ENCODE measurements at regions of chr2 and their contacts with region 1.

Region 1: DNA sequence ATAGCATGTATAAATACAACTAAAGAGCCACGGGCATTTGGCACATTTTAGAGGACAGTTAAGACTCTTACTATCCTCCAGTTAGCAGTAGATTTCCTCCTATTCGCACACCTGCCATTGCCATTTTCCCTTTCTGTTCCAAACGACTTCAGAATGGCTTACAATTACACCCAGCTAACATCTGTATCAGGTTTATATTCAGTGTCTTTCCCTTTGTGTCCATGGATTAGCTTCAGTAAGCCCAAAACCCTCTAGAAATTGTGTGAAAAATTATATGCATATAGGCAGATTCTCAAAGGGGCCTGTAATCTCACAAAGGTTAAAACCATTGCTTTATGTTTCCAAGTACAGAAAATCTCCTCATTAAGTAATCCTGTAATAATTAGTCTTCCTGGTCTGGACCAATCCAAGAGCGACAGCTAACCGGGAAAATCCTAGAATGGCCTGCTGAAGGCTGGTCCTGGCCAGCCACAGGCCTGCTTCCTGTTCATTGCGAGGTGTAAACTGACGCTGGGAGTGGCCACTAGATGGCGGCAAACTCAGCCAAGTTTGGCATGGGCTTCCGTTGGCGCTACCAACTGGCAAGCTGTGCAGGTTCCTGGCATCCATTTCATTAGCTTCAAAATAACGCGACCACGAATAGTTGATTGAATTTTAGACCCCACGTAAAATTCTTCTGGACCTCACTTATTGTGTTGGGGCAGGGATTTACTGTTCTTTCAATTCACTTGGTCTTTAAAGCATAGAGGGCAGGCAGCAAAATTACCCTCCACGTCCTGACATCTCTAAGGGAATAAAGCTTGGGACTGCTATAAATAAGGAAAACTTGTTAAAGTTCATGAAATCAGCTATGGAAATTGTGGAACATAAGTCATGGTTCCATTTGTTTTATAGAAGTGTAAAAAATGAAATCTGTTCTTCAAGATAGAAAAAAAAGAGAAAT is 17.1 kb downstream of the ARHGAP25 start:
- DNase-seq: peak; percentile 87
- H3K4me3 ChIP-seq: no peak overlapping the region
- H3K27ac ChIP-seq: no peak overlapping the region
- H3K4me1 ChIP-seq: peaks cover 8% of the 10 kb centered on the region
- H3K27me3 ChIP-seq: no peaks in the 10 kb centered on the region
- CTCF ChIP-seq: peak; percentile 95 to 97

Region 2: DNA sequence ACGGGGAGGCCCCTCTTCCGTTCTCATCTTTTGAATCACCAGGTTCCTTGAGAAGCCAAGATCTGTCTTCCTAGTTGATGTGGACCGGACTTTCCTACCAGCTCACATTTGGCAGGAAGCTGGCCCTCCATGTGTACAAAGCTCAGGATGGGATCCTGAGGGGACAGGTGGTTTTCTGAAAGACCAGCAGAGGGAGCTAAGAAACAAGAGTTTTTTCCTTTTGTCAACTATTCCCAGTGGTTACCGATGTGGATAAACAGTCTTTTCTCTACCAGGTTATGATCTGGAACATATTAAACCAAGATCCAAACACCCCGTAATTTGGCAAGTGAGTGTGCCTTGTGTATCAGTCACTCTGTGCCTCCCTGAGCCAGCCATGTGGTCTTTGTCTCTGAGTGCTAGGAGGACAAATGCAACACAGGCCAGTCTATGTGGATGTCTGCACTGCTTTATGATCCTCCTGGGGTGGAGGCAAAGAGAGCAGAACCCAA is 42.2 kb before region 1 on chr2:
- CTCF ChIA-PET with region 1: no interaction called
- dilution Hi-C with region 1: no loop called
- in situ Hi-C with region 1: no loop called
- intact Hi-C with region 1: loop called (anchors 2 kb)
- DNase-seq: peak; percentile 39
- H3K4me3 ChIP-seq: no peak overlapping the region
- H3K27ac ChIP-seq: no peak overlapping the region
- H3K4me1 ChIP-seq: no peaks in the 10 kb centered on the region
- H3K27me3 ChIP-seq: peaks cover 3% of the 10 kb centered on the region
- CTCF ChIP-seq: peak; percentile 63 to 81

Region 3: GRCh38 chr2:68807821-68808266 is 56.2 kb after region 1 on chr2:
- CTCF ChIA-PET with region 1: interaction called, 52 read pairs
- dilution Hi-C with region 1: no loop called
- in situ Hi-C with region 1: no loop called
- intact Hi-C with region 1: loop called (anchors 1 kb)
- DNase-seq: peak; percentile 95
- H3K4me3 ChIP-seq: no peak overlapping the region
- H3K27ac ChIP-seq: peak overlapping the region; percentile 63
- H3K4me1 ChIP-seq: peaks cover 77% of the 10 kb centered on the region
- H3K27me3 ChIP-seq: no peaks in the 10 kb centered on the region
- CTCF ChIP-seq: no peak

Region 4: DNA sequence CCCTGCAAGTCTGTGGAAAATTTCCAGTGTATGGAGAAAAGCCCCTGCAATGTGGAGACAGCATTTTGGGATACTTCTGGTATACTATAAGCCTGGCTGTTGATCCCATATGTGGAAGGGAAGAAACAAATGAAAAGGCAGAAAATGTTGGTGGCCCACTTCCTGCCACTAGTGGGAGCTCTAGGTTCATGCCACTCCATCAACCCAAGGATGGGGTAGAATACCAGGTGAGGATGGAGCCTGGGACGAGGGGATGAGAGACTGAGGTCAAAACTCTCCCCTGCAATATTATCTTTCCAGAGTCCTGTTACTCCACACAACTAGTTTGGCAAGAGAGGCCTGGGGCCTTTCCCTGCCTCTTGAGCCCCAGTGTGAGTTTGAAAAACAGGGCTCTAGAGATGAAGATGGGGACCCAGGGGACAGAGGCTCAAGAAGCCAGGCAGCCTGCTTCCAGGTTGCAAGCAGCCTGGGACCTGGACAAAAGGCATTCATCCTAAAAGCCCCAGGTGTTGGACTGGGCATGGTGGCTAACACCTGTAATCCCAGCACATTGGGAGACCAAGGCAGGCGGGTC is 87.7 kb after region 1 on chr2:
- CTCF ChIA-PET with region 1: no interaction called
- dilution Hi-C with region 1: no loop called
- in situ Hi-C with region 1: no loop called
- intact Hi-C with region 1: loop called (anchors 1 kb)
- DNase-seq: peak; percentile 12
- H3K4me3 ChIP-seq: no peak overlapping the region
- H3K27ac ChIP-seq: no peak overlapping the region
- H3K4me1 ChIP-seq: no peaks in the 10 kb centered on the region
- H3K27me3 ChIP-seq: no peaks in the 10 kb centered on the region
- CTCF ChIP-seq: peak; percentile 78 to 91

Region 5: DNA sequence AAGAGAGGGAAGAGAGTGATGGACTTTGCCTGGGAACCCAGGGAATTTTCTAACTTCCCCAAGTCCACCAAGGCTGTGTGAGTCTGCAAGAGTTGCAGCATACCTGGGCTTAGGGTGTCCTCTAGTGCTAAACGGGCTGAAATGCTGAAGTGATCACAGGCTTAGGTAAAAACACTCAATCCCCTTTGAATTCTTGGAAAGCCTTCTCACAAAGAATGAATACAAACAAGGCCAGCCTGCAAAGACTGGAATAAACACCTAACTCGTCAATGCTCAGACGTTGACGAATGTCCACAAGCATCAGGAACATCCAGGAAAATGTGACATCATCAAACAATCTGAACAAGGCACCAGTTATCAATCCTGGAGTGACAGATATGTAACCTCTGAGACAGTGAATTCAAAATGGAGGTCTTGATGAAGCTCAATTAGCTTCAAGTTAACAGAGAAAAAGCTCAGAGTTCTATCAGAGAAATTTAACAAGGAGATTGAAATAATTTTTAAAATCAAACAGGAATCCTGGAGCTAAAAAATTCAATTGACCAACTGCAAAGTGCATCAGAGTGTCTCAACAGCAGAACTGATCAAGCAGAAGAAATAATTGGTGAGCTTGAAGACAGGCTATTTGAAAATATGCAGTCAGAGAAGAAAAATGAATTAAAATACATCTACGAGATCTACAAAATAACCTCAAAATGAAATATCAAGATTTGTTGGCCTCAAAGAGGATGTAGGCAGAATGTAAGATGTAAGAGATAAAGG is 149.7 kb after region 1 on chr2:
- CTCF ChIA-PET with region 1: interaction called, 4 read pairs
- dilution Hi-C with region 1: loop called (anchors 25 kb)
- in situ Hi-C with region 1: loop called in 1 of 2 experiments (anchors 5 kb)
- intact Hi-C with region 1: loop called (anchors 2 kb)
- DNase-seq: peak; percentile 28
- H3K4me3 ChIP-seq: no peak overlapping the region
- H3K27ac ChIP-seq: no peak overlapping the region
- H3K4me1 ChIP-seq: no peaks in the 10 kb centered on the region
- H3K27me3 ChIP-seq: no peaks in the 10 kb centered on the region
- CTCF ChIP-seq: peak in 1 of 2 donors; percentile 16

Region 6: DNA sequence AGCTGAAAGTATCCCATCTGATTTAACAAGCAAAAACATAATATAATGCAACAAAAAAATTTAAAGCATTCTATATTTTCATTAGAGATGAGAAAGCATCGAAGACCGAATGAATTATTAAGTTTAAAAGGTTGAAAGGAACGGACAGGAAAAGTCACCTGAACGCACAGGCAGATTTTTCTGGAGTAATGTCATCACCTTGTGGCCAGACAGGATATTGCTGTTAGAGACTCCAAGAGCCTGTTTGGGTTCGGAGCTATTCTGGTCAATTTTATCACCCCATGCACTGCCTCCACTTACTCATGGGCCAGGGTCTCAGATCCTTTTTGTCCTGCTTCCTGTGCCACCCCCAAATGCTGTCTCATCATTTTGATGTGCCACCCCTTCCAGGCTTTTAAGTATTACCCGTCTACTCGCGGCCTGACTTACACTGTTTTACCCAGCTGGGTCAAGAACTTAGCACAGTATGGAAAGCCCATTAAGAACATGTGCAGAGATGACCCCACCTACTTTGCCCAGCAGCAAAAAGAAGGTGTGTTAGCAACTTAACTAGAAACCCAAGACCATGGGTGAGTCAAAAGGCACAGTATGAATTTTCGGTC is 173.7 kb after region 1 on chr2:
- CTCF ChIA-PET with region 1: interaction called, 8 read pairs
- dilution Hi-C with region 1: loop called (anchors 25 kb)
- in situ Hi-C with region 1: no loop called
- intact Hi-C with region 1: loop called (anchors 1 kb)
- DNase-seq: peak; percentile 55
- H3K4me3 ChIP-seq: no peak overlapping the region
- H3K27ac ChIP-seq: no peak overlapping the region
- H3K4me1 ChIP-seq: peaks cover 21% of the 10 kb centered on the region
- H3K27me3 ChIP-seq: no peaks in the 10 kb centered on the region
- CTCF ChIP-seq: peak; percentile 99

Region 7: DNA sequence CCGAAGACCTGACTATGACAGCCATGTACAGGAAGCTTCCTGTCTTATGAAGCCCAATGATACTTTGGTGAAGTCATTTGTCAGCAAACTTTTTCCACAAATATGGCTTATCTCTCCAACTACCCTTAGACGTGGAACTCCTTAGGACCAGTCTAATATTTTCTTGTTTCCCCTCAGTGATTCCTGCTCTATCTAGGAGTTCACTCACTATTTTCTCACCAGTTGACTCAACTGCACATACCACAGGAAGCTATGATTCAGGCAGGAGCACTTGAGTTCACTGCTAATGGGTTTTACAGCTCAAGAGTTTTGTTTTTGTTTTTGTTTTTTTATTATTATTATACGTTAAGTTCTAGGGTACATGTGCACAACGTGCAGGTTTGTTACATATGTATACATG is 370.6 kb after region 1 on chr2:
- CTCF ChIA-PET with region 1: no interaction called
- dilution Hi-C with region 1: no loop called
- in situ Hi-C with region 1: no loop called
- intact Hi-C with region 1: no loop called
- DNase-seq: peak; percentile 53
- H3K4me3 ChIP-seq: no peak overlapping the region
- H3K27ac ChIP-seq: no peak overlapping the region
- H3K4me1 ChIP-seq: peaks cover 13% of the 10 kb centered on the region
- H3K27me3 ChIP-seq: no peaks in the 10 kb centered on the region
- CTCF ChIP-seq: no peak

Measured in mammary epithelial cell (primary cell).